HCT116 (cell line): ENCODE measurements at regions of chr10 and their contacts with region 1.

Region 1: DNA sequence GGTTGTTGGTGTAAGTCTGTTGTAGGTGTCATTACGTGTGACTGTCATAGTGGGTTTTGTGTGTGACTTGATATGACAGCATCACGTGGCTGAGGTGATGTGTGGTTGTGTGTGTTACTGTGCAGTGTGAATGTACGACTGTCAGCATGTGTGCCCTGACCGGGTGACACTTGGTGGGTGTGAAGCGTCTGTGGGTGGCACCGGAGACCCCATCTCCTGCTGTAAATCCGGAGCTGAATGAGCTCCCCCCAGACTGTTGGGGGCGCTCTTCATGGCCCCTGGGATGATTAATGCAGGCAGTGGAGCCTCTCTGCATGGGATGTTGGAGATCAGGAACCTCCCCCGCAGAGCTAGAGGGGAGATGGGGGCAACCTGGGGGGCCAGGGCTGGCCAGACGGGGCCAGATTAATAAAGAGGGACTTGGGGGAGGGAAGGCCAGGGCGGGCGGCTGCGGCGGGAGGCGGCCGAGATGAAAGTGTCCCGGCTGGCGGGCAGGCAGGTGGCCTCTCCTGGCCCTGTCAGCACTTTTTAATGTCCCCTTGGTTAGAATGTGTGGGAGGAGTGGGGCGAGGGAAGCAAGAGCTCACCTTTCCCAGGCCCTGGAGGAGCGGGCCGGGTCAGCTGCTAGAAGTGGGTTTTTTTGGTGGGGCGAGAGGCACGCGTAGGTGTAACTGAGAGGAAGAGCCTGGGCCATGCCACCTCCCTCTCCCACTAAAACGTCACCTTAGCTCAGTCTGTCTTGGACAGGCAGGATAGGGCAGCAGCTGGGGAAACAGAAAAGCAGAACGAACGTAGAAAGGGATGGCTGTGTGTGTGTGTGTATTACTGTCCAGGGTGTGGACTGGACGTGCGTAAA is 34.1 kb downstream of the HIF1AN start:
- DNase-seq: peak; percentile 37
- ATAC-seq: peak; percentile 87
- H3K4me3 ChIP-seq: peak overlapping the region; percentile 71 to 76
- H3K27ac ChIP-seq: peak overlapping the region; percentile 24; the same call in 1 of the 2 replicates
- H3K4me1 ChIP-seq: peaks cover 0 to 13% of the 10 kb centered on the region in 2 experiments; a peak in 2 of 4 replicates
- H3K27me3 ChIP-seq: no peaks in the 10 kb centered on the region
- CTCF ChIP-seq: peak; percentile 86 to 96 (median 95)
- POLR2A ChIP-seq: peak; percentile 55
- RAD21 ChIP-seq: peak; percentile 52

Region 2: GRCh38 chr10:98956576-98957260 is 1613.1 kb before region 1 on chr10:
- CTCF ChIA-PET with region 1: no interaction called
- POLR2A ChIA-PET with region 1: no interaction called
- RAD21 ChIA-PET with region 1: no interaction called
- intact Hi-C with region 1: no loop called
- DNase-seq: no peak
- ATAC-seq: no peak
- H3K4me3 ChIP-seq: no peak overlapping the region
- H3K27ac ChIP-seq: no peak overlapping the region
- H3K4me1 ChIP-seq: no peaks in the 10 kb centered on the region
- H3K27me3 ChIP-seq: no peaks in the 10 kb centered on the region; the same call in 1 of the 2 replicates
- CTCF ChIP-seq: no peak
- POLR2A ChIP-seq: no peak
- RAD21 ChIP-seq: no peak

Region 3: GRCh38 chr10:100535715-100536353 is 34.0 kb before region 1 on chr10 and contains the start of gene HIF1AN:
- CTCF ChIA-PET with region 1: interaction called, 19 read pairs
- POLR2A ChIA-PET with region 1: interaction called, 6 read pairs
- RAD21 ChIA-PET with region 1: no interaction called
- intact Hi-C with region 1: no loop called
- DNase-seq: peak; percentile 97
- ATAC-seq: peak; percentile 99
- H3K4me3 ChIP-seq: peak within 1 kb of the TSS; percentile 79 to 83
- H3K27ac ChIP-seq: peak within 1 kb of the TSS; percentile 14; the same call in 1 of the 2 replicates
- H3K4me1 ChIP-seq: peaks cover 10 to 17% of the 10 kb centered on the region in 2 experiments
- H3K27me3 ChIP-seq: no peaks in the 10 kb centered on the region
- CTCF ChIP-seq: peak; percentile 80 to 99 (median 97)
- POLR2A ChIP-seq: peak; percentile 92
- RAD21 ChIP-seq: no peak
- total RNA-seq, gene HIF1AN: 67.2 TPM

Region 4: GRCh38 chr10:100827819-100828737 is 258.2 kb after region 1 on chr10:
- CTCF ChIA-PET with region 1: no interaction called
- POLR2A ChIA-PET with region 1: no interaction called
- RAD21 ChIA-PET with region 1: no interaction called
- intact Hi-C with region 1: loop called (anchors 5 kb)
- DNase-seq: no peak
- ATAC-seq: peak; percentile 66
- H3K4me3 ChIP-seq: peak overlapping the region; percentile 51 to 70
- H3K27ac ChIP-seq: peak overlapping the region; percentile 54; the same call in 1 of the 2 replicates
- H3K4me1 ChIP-seq: peaks cover 12 to 30% of the 10 kb centered on the region in 2 experiments; a peak in 3 of 4 replicates
- H3K27me3 ChIP-seq: peaks cover 6% of the 10 kb centered on the region; the same call in 1 of the 2 replicates
- CTCF ChIP-seq: peak in 1 of 3 experiments; percentile 17; a peak in 1 of 6 replicates
- POLR2A ChIP-seq: no peak
- RAD21 ChIP-seq: no peak; the same call in 1 of the 2 replicates